MCF 10A (cell line): ENCODE measurements at regions of chr6 and their contacts with region 1.

Region 1: GRCh38 chr6:71420693-71421328 is 132.2 kb downstream of the OGFRL1 start:
- DNase-seq: peak; percentile 93
- H3K4me3 Mint-ChIP-seq: peak overlapping the region; percentile 69
- H3K27ac Mint-ChIP-seq: peak overlapping the region; percentile 36
- H3K4me1 Mint-ChIP-seq: peaks cover 12% of the 10 kb centered on the region
- H3K27me3 Mint-ChIP-seq: no peaks in the 10 kb centered on the region
- CTCF ChIP-seq: no peak

Region 2: GRCh38 chr6:71383901-71384489 is 36.8 kb before region 1 on chr6:
- CTCF ChIA-PET with region 1: no interaction called
- POLR2A ChIA-PET with region 1: interaction called, 8 read pairs
- intact Hi-C with region 1: loop called (anchors 1 kb)
- DNase-seq: peak; percentile 56
- H3K4me3 Mint-ChIP-seq: no peak overlapping the region
- H3K27ac Mint-ChIP-seq: no peak overlapping the region
- H3K4me1 Mint-ChIP-seq: peaks cover 14% of the 10 kb centered on the region
- H3K27me3 Mint-ChIP-seq: no peaks in the 10 kb centered on the region
- CTCF ChIP-seq: peak; percentile 45

Region 3: DNA sequence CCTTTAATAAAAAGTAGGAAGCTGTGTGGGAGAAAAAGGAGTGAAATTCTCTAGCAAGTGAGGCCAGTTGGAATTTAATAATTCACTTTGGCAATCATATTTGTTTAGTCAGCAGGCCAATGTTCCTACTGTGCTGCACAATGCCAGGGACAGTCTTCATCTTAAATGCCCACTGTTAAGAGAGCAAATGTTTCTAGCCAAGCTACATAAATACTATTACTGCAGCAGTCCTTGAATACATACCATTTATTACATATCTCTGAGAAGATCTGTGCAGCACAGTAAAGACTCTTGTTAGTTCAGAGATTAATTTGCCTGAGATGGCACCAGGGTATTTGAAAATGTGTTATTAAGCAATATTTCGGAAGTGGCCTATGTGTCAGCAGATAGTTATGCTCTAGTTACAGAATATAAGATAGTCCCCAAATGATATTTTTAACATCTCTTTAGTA is 26.8 kb before region 1 on chr6:
- CTCF ChIA-PET with region 1: interaction called, 3 read pairs
- POLR2A ChIA-PET with region 1: interaction called, 15 read pairs
- intact Hi-C with region 1: no loop called
- DNase-seq: peak; percentile 59
- H3K4me3 Mint-ChIP-seq: peak overlapping the region; percentile 19
- H3K27ac Mint-ChIP-seq: peak overlapping the region; percentile 31
- H3K4me1 Mint-ChIP-seq: peaks cover 39% of the 10 kb centered on the region
- H3K27me3 Mint-ChIP-seq: no peaks in the 10 kb centered on the region
- CTCF ChIP-seq: no peak

Region 4: DNA sequence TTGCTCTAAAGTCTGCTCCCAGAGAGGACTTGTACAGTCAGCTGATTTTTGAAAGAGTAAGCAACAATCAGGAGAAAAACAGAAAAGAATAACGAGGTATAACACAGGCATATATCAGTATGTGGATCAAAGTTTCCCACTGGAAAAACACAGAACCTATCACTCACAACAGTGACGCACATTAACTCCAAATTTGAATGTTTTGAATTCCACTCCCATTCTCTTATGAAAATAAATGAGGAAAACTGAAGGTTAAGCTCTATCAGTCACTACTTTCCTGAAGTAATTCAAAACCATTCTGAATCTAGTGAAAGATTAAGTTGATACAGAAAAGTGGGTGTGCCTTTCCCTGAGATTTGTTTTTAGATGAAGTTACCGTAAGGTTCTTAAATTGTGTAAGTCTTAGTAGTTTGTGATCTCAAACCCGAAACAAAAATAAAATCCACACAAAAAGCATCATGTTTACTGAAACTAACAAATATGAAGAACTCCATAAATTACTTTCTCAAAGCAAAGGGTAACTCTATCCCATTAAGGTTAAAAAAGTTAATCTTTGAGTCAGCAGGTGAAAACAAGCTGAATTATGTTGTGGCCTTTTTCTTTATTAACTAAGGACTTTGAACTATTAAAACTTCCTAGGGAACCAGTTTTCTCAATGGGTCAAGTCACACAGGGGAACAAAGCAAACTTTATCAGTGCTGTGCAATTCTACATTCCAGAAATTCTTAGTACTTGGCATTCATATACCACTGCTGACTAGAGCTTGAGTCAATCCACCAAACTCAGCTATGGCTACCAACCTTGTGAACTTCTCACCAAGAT is 16.5 kb before region 1 on chr6:
- CTCF ChIA-PET with region 1: interaction called, 3 read pairs
- POLR2A ChIA-PET with region 1: interaction called, 43 read pairs
- intact Hi-C with region 1: no loop called
- DNase-seq: peak; percentile 54
- H3K4me3 Mint-ChIP-seq: peak overlapping the region; percentile 64
- H3K27ac Mint-ChIP-seq: peak overlapping the region; percentile 75
- H3K4me1 Mint-ChIP-seq: peaks cover 26% of the 10 kb centered on the region
- H3K27me3 Mint-ChIP-seq: no peaks in the 10 kb centered on the region
- CTCF ChIP-seq: no peak

Region 5: DNA sequence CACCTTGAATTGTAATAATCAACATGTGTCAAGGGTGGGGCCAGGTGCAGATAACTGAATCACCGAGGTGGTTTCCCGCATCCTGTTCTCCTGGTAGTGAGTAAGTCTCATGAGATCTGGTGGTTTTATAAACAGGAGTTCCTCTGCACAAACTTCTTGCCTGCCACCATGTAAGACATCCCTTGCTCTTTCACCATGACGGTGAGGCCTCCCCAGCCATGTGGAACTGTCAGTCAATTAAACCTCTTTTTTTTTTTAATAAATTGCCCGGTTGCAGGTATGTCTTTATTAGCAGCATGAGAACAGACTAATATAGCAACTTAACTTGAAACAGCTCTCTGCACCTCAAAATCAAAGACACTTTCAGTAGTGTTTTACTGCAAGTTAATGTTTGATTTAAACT is 10.6 kb before region 1 on chr6:
- CTCF ChIA-PET with region 1: interaction called, 3 read pairs
- POLR2A ChIA-PET with region 1: interaction called, 43 read pairs
- intact Hi-C with region 1: no loop called
- DNase-seq: peak; percentile 23
- H3K4me3 Mint-ChIP-seq: no peak overlapping the region
- H3K27ac Mint-ChIP-seq: no peak overlapping the region
- H3K4me1 Mint-ChIP-seq: peaks cover 20% of the 10 kb centered on the region
- H3K27me3 Mint-ChIP-seq: no peaks in the 10 kb centered on the region
- CTCF ChIP-seq: no peak

Region 6: DNA sequence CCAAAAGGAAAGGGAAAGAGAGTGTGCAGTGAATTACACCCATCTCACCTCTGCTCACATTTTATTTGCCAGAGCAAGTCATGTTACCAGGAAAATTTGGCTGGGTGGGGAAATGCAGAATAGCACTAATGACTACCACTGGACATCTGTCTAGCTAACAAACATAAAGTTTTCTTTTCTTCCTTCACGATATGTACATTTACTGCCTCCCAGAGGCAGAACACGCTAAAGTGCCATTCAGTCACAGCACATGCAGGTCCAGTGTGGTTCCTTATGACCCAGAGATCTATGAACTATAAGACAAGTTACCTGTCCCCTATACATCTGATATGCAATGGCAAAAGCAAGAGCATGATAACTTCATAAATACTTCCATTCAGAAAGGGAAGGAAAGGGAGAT is 61.9 kb after region 1 on chr6:
- CTCF ChIA-PET with region 1: interaction called, 3 read pairs
- POLR2A ChIA-PET with region 1: interaction called, 8 read pairs
- intact Hi-C with region 1: loop called (anchors 2 kb)
- DNase-seq: peak; percentile 26
- H3K4me3 Mint-ChIP-seq: no peak overlapping the region
- H3K27ac Mint-ChIP-seq: no peak overlapping the region
- H3K4me1 Mint-ChIP-seq: peaks cover 17% of the 10 kb centered on the region
- H3K27me3 Mint-ChIP-seq: no peaks in the 10 kb centered on the region
- CTCF ChIP-seq: peak; percentile 36

Region 7: GRCh38 chr6:71510057-71510713 is 89.4 kb after region 1 on chr6:
- CTCF ChIA-PET with region 1: no interaction called
- POLR2A ChIA-PET with region 1: no interaction called
- intact Hi-C with region 1: loop called (anchors 1 kb)
- DNase-seq: peak; percentile 67
- H3K4me3 Mint-ChIP-seq: no peak overlapping the region
- H3K27ac Mint-ChIP-seq: peak overlapping the region; percentile 7
- H3K4me1 Mint-ChIP-seq: peaks cover 6% of the 10 kb centered on the region
- H3K27me3 Mint-ChIP-seq: no peaks in the 10 kb centered on the region
- CTCF ChIP-seq: peak; percentile 64